MCF 10A (cell line): ENCODE measurements at regions of chr2 and their contacts with region 1.

Region 1: DNA sequence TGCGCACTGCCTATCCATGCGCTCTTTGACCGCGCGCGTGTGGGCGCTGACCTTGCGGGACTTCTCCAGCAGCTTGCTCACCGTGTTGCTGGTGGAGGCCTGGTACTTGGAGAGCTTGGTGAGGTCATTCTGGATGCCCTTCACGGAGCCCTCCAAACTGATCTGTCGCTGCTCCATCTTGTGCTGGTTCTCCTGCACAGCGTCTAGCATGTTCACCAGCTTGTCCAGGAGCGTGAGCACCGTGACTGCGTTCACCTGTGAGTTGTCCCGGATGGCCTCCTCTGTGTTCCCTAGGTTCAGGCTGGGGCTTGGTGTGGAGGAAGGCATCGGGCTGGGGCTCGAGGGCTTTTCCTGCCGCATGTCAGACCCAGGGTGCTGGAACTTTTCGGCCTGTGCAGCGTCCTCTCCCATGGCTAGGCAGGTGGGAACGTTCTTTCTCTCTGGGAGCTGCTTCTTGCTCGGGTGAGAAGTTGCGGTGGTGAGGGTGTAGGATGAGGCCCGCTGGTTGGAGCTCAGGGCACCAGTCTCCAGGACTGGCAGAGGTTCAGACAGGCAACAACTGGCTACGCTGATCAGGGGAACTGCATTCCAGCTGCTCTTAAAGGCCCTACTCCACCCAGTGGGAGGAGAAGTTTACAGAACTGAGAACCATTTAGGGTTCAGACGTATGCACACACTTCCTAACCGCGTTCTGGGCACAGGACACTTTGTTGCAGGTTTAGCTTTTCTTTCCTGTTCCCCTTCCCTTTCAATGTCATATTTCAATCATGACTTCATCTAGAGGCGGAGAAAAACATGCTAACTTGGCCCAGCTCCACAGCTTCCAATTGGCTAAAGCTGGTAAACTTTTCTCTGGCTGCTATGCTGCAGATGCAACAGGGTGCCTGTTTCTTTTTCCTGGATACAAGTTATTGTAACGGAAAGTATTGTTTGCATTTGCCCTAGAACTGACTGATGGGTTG is at the start of gene CAVIN2:
- DNase-seq: peak; percentile 95
- H3K4me3 Mint-ChIP-seq: peak within 1 kb of the TSS; percentile 90
- H3K27ac Mint-ChIP-seq: peak within 1 kb of the TSS; percentile 86
- H3K4me1 Mint-ChIP-seq: peaks cover 35% of the 10 kb centered on the region
- H3K27me3 Mint-ChIP-seq: no peaks in the 10 kb centered on the region
- CTCF ChIP-seq: no peak
- total RNA-seq, gene CAVIN2: 14.7 and 16.4 TPM in 2 replicates

Region 2: DNA sequence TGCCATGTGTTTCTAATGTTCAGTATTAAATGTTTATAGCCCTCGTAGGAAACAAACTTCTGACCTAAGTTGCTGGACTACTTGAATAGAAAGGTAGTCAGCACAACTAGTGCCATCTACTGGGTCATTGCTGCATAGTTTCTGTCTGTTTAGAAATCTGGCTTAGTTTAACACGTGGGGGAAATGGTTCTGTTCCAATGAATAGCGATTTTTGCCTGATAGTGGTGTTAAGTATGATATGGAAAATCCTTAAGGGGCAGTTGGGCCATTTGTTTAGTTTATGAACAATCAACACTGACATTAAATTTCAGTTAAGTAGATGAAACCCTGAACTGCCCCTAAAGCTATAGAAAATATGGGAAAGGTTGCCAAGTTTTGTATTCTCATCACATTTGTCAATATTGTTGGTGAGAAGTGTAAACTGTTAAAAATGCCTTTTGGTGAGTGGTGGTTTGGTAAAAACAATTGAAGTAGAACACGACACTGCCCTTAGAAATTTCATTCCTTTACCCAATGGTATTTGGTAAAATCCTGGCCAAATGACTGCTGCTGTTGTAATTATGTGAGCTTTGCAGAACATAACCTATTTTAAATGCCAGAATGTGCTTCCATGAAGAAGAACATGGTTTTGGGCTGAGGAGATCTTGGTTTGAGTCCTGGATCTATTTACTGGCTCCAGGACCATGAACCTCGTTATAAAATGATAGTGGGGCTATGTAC is 155.6 kb before region 1 on chr2:
- CTCF ChIA-PET with region 1: no interaction called
- POLR2A ChIA-PET with region 1: interaction called, 6 read pairs
- intact Hi-C with region 1: loop called (anchors 5 kb)
- DNase-seq: peak; percentile 77
- H3K4me3 Mint-ChIP-seq: peak overlapping the region; percentile 32
- H3K27ac Mint-ChIP-seq: peak overlapping the region; percentile 72
- H3K4me1 Mint-ChIP-seq: peaks cover 34% of the 10 kb centered on the region
- H3K27me3 Mint-ChIP-seq: no peaks in the 10 kb centered on the region
- CTCF ChIP-seq: peak; percentile 66

Region 3: GRCh38 chr2:191857259-191857805 is 10.5 kb after region 1 on chr2:
- CTCF ChIA-PET with region 1: interaction called, 5 read pairs
- POLR2A ChIA-PET with region 1: interaction called, 27 read pairs
- intact Hi-C with region 1: no loop called
- DNase-seq: peak; percentile 55
- H3K4me3 Mint-ChIP-seq: no peak overlapping the region
- H3K27ac Mint-ChIP-seq: no peak overlapping the region
- H3K4me1 Mint-ChIP-seq: peaks cover 14% of the 10 kb centered on the region
- H3K27me3 Mint-ChIP-seq: no peaks in the 10 kb centered on the region
- CTCF ChIP-seq: no peak

Region 4: GRCh38 chr2:191878576-191879279 is 31.9 kb after region 1 on chr2:
- CTCF ChIA-PET with region 1: interaction called, 3 read pairs
- POLR2A ChIA-PET with region 1: interaction called, 110 read pairs
- intact Hi-C with region 1: loop called (anchors 1 kb)
- DNase-seq: peak; percentile 69
- H3K4me3 Mint-ChIP-seq: no peak overlapping the region
- H3K27ac Mint-ChIP-seq: peak overlapping the region; percentile 68
- H3K4me1 Mint-ChIP-seq: peaks cover 22% of the 10 kb centered on the region
- H3K27me3 Mint-ChIP-seq: no peaks in the 10 kb centered on the region
- CTCF ChIP-seq: no peak

Region 5: GRCh38 chr2:192004188-192004963 is 157.6 kb after region 1 on chr2:
- CTCF ChIA-PET with region 1: no interaction called
- POLR2A ChIA-PET with region 1: interaction called, 7 read pairs
- intact Hi-C with region 1: loop called (anchors 10 kb)
- DNase-seq: no peak
- H3K4me3 Mint-ChIP-seq: no peak overlapping the region
- H3K27ac Mint-ChIP-seq: no peak overlapping the region
- H3K4me1 Mint-ChIP-seq: no peaks in the 10 kb centered on the region
- H3K27me3 Mint-ChIP-seq: no peaks in the 10 kb centered on the region
- CTCF ChIP-seq: no peak